ENCODE measurements at regions of chr11 and their contacts with region 1.

Region 1: GRCh38 chr11:46865340-46865739 is 19.3 kb upstream of the CKAP5 start:
- DNase-seq: no peak
- H3K4me3 ChIP-seq: no peak overlapping the region
- H3K27ac ChIP-seq: no peak overlapping the region
- H3K4me1 ChIP-seq: no peaks in the 10 kb centered on the region
- H3K27me3 ChIP-seq: no peaks in the 10 kb centered on the region
- CTCF ChIP-seq: no peak

Region 2: GRCh38 chr11:46017341-46017740 is 848.0 kb before region 1 on chr11:
- CTCF ChIA-PET with region 1: no interaction called
- POLR2A ChIA-PET with region 1: interaction called, 11 read pairs
- intact Hi-C with region 1: no loop called
- DNase-seq: no peak
- H3K4me3 ChIP-seq: no peak overlapping the region
- H3K27ac ChIP-seq: no peak overlapping the region
- H3K4me1 ChIP-seq: no peaks in the 10 kb centered on the region
- H3K27me3 ChIP-seq: no peaks in the 10 kb centered on the region
- CTCF ChIP-seq: no peak

Region 3: DNA sequence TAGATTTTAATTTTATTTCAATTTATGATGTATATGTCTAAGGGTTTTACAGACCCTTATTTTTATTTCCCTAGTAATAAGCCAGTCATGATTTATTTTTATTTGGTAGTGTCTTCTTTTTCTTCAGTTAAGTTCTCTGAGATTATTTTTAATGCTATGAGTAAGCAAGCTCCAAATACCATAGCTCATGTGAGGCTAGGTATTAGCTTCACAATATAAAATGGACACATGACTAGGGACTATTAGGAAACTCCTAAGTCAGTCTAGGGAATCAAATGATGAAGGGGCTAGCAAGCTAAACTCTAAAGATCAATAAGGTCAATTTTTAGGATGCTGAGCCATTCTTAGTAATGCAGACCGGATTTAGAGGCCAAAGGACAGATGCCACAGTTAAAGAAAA is 65.2 kb before region 1 on chr11:
- CTCF ChIA-PET with region 1: no interaction called
- POLR2A ChIA-PET with region 1: interaction called, 11 read pairs
- intact Hi-C with region 1: no loop called
- DNase-seq: no peak
- H3K4me3 ChIP-seq: no peak overlapping the region
- H3K27ac ChIP-seq: no peak overlapping the region
- H3K4me1 ChIP-seq: no peaks in the 10 kb centered on the region
- H3K27me3 ChIP-seq: no peaks in the 10 kb centered on the region
- CTCF ChIP-seq: no peak

Measured in A673 (cell line).